ENCODE measurements at regions of chr5 and their contacts with region 1.

Region 1: GRCh38 chr5:132272311-132273210 is 15.1 kb downstream of the PDLIM4 start:
- DNase-seq: peak in 1 of 2 experiments; percentile 97
- H3K4me3 ChIP-seq: no peak overlapping the region
- H3K27ac ChIP-seq: no peak overlapping the region
- H3K4me1 ChIP-seq: peaks cover 0 to 6% (median under 1%) of the 10 kb centered on the region in 4 experiments; a peak in 3 of 7 replicates
- H3K27me3 ChIP-seq: no peaks in the 10 kb centered on the region
- CTCF ChIP-seq: peak; percentile 47 to 76 (median 73)
- EP300 ChIP-seq: no peak
- POLR2A ChIP-seq: no peak
- RAD21 ChIP-seq: peak; percentile 66 to 75

Region 2: DNA sequence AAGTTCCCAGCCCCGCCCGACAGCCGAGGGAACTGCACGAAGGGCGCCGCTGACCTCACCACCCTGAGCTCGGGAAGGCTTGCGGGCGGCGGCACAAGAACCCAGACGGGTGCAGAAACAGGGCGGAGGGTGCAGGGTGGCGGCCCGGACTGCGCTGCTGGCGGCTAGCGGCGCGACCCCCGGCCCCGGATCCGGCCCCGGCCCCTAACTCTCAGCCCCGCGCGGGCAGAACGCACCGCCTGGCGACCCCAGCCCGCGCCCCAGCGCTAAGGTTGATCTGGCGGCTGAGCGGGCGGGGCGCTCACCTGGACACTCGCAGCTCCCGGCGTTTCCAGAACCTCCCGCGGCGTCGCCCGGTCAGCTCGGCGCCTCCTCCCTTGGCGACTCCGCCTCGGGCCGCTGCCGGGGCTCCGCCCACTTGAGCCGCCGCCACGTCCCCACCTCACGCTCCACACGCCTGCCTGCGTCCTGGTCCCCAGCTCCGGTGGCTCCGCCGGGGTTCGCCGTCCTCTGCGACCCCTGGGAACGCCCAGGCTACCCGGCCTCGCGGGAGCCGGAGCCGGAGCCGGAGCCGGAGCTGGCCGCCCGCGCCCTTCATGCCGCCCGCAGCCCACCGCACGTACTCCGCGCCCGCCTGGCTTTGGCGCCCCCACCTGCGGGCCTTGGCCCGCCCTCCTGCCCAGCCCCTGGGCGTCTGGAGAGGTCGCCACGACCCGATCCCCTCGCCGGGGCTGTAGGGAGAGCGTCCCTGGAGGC is 44.9 kb before region 1 on chr5 and contains the start of gene P4HA2:
- CTCF ChIA-PET with region 1: interaction called, 11 read pairs
- POLR2A ChIA-PET with region 1: no interaction called
- DNase-seq: peak; percentile 46 to 86
- H3K4me3 ChIP-seq: peak within 1 kb of the TSS; percentile 57 to 77 (median 60)
- H3K27ac ChIP-seq: no peak within 1 kb of the TSS; the same call in 1 of the 2 replicates
- H3K4me1 ChIP-seq: peaks cover 0 to 7% (median 5%) of the 10 kb centered on the region in 4 experiments; a peak in 4 of 7 replicates
- H3K27me3 ChIP-seq: peaks cover 3 to 22% (median 20%) of the 10 kb centered on the region in 4 experiments
- CTCF ChIP-seq: no peak
- EP300 ChIP-seq: no peak
- POLR2A ChIP-seq: peak in 1 of 2 experiments; percentile 54; a peak in 1 of 3 replicates
- RAD21 ChIP-seq: no peak; a peak in 1 of 4 replicates
- total RNA-seq, gene P4HA2: 7.4 and 8.2 TPM in 2 replicates

Region 3: GRCh38 chr5:132260714-132261551 is 11.6 kb before region 1 on chr5:
- CTCF ChIA-PET with region 1: interaction called, 54 read pairs
- POLR2A ChIA-PET with region 1: interaction called, 5 read pairs
- DNase-seq: peak in 1 of 2 experiments; percentile 23
- H3K4me3 ChIP-seq: no peak overlapping the region
- H3K27ac ChIP-seq: no peak overlapping the region
- H3K4me1 ChIP-seq: peaks cover 0 to 19% (median 6%) of the 10 kb centered on the region in 4 experiments; a peak in 6 of 7 replicates
- H3K27me3 ChIP-seq: peaks cover 0 to 10% (median 9%) of the 10 kb centered on the region in 4 experiments; a peak in 3 of 7 replicates
- CTCF ChIP-seq: no peak
- EP300 ChIP-seq: no peak
- POLR2A ChIP-seq: no peak
- RAD21 ChIP-seq: no peak

Region 4: DNA sequence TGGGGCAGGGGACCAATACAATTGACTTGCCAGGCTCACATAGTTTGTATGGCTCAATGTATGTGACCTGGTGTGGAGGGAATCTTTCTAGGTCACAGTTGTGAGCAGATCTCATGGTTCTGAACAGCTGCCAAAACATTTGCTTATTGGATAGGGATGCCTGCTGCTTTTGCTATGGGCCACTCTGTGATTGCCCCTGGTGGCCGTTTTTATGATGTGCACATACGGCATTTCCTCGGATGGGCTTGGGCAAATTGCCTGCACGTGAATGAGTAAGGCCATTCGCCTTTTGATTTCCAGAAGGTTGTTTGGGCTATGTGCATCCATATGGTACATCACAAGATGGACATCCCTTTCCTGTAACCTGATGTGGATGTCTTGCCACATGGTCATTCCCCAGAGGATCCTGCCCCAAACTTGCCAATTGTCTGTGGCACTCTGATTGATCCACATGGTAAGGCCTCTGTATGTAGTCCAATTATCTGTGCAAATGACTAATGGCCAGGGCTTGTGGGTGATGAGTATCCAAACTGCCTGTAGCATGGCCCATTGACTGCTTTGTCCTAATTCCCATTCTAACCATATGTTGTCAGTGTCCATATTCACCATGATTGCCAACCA is 11.0 kb after region 1 on chr5:
- CTCF ChIA-PET with region 1: interaction called, 33 read pairs
- POLR2A ChIA-PET with region 1: interaction called, 5 read pairs
- DNase-seq: peak in 1 of 2 experiments; percentile 59
- H3K4me3 ChIP-seq: no peak overlapping the region
- H3K27ac ChIP-seq: no peak overlapping the region
- H3K4me1 ChIP-seq: peaks cover 0 to 2% (median under 1%) of the 10 kb centered on the region in 4 experiments; a peak in 2 of 7 replicates
- H3K27me3 ChIP-seq: no peaks in the 10 kb centered on the region
- CTCF ChIP-seq: peak; percentile 48 to 76 (median 64)
- EP300 ChIP-seq: no peak
- POLR2A ChIP-seq: no peak
- RAD21 ChIP-seq: peak; percentile 40 to 52; a peak in 3 of 4 replicates

Region 5: DNA sequence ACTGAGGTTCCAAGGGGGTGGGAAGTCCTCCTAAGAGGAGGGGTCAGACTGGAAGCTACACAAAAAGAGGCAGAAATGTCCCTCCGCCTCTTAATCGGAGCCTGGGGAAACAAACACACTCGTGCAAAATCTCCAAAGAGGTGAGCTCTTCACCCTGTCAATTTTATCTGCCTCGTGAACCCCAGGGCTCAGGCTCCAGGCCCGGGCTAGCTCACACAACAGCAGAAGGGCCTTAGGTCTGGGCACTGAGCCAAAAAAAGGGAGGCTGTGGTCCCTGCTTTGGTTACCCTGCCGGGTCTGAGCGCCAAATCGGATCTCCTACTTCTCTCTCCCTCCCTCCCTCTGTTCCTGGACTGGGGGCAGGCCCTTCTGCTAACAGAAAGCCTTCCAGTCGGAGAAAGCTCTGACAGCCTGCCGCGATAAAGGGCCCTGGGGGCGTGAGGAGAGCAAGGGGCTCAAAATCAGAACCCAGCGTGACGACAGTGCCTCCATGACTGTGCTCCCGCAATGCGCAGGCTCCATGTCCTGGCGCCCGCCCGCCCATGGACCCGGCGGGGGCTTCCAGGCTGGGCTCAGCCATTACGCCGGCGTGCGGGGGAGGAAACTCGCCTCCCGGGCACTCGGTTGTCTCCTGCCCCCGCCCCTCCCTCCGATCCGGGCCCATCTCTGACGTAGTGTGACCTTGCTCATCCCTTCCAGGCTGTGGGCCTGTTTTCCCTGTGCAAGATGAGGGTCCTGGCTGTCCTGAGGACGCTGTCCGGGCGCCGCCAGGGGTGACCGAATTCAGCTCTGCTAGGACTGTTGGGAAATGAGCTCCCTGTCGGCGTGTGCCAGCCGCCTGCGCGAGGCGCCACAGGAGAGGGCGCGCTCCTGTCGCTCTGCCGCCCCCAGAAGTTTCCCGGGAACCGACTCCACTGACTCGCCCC is 20.8 kb after region 1 on chr5:
- CTCF ChIA-PET with region 1: interaction called, 21 read pairs
- POLR2A ChIA-PET with region 1: interaction called, 26 read pairs
- DNase-seq: peak in 1 of 2 experiments; percentile 89
- H3K4me3 ChIP-seq: peak overlapping the region; percentile 53 to 75 (median 65)
- H3K27ac ChIP-seq: peak overlapping the region; percentile 74
- H3K4me1 ChIP-seq: peaks cover 0 to 12% (median 3%) of the 10 kb centered on the region in 4 experiments; a peak in 5 of 7 replicates
- H3K27me3 ChIP-seq: peaks cover 2 to 21% (median 16%) of the 10 kb centered on the region in 4 experiments
- CTCF ChIP-seq: no peak
- EP300 ChIP-seq: peak in 1 of 2 experiments; percentile 56; a peak in 1 of 3 replicates
- POLR2A ChIP-seq: peak in 1 of 2 experiments; percentile 81; a peak in 2 of 3 replicates
- RAD21 ChIP-seq: no peak

Region 6: GRCh38 chr5:132376694-132377641 is 104.4 kb after region 1 on chr5:
- CTCF ChIA-PET with region 1: interaction called, 12 read pairs
- POLR2A ChIA-PET with region 1: no interaction called
- DNase-seq: no peak
- H3K4me3 ChIP-seq: no peak overlapping the region
- H3K27ac ChIP-seq: no peak overlapping the region
- H3K4me1 ChIP-seq: no peaks in the 10 kb centered on the region
- H3K27me3 ChIP-seq: 0 out of 7 replicates have a peak, but pooled peaks cover 0 to 2% (median 0%) of the 10 kb centered on the region in 4 experiments
- CTCF ChIP-seq: no peak
- EP300 ChIP-seq: no peak
- POLR2A ChIP-seq: no peak
- RAD21 ChIP-seq: no peak

Region 7: DNA sequence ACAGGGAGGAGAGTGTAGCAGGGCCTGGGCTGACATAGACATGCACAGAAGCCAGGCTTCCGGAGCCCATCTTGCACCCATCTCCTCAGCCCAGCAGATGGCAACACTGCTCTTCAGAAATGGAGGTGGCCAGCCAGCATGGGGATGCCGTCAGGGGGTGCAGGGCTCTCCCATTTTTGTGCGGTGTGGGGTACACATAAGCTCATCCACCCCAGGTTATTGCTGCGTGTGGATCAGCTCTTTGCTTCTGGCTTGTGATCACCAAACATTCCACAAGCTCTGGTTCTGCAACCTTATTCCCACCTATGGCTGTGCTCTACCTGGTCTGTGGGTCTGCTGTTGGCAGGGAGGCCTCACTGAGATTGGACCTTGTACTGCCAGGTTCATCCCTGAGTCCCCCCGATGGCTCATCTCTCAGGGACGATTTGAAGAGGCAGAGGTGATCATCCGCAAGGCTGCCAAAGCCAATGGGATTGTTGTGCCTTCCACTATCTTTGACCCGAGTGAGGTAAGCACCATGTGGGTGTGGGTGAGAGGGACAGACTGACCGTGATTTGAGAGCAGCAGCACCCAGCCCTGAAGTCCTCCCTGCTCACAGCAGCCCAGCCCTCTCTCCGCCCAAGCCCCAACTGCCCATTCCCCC is 114.2 kb after region 1 on chr5:
- CTCF ChIA-PET with region 1: interaction called, 12 read pairs
- POLR2A ChIA-PET with region 1: no interaction called
- DNase-seq: peak in 1 of 2 experiments; percentile 81
- H3K4me3 ChIP-seq: no peak overlapping the region
- H3K27ac ChIP-seq: no peak overlapping the region
- H3K4me1 ChIP-seq: peaks cover 0 to 9% (median 3%) of the 10 kb centered on the region in 4 experiments; a peak in 4 of 7 replicates
- H3K27me3 ChIP-seq: no peaks in the 10 kb centered on the region
- CTCF ChIP-seq: peak; percentile 84 to 90 (median 86)
- EP300 ChIP-seq: no peak
- POLR2A ChIP-seq: no peak
- RAD21 ChIP-seq: peak; percentile 92 to 93

Region 8: GRCh38 chr5:132466433-132467286 is 194.1 kb after region 1 on chr5:
- CTCF ChIA-PET with region 1: no interaction called
- POLR2A ChIA-PET with region 1: no interaction called
- DNase-seq: no peak
- H3K4me3 ChIP-seq: no peak overlapping the region
- H3K27ac ChIP-seq: no peak overlapping the region
- H3K4me1 ChIP-seq: peaks cover 6 to 19% (median 11%) of the 10 kb centered on the region in 4 experiments
- H3K27me3 ChIP-seq: no peaks in the 10 kb centered on the region
- CTCF ChIP-seq: no peak
- EP300 ChIP-seq: peak in 1 of 2 experiments; percentile 7; a peak in 1 of 3 replicates
- POLR2A ChIP-seq: no peak
- RAD21 ChIP-seq: no peak